IMR-90 (cell line): ENCODE measurements at regions of chr10 and their contacts with region 1.

Region 1: DNA sequence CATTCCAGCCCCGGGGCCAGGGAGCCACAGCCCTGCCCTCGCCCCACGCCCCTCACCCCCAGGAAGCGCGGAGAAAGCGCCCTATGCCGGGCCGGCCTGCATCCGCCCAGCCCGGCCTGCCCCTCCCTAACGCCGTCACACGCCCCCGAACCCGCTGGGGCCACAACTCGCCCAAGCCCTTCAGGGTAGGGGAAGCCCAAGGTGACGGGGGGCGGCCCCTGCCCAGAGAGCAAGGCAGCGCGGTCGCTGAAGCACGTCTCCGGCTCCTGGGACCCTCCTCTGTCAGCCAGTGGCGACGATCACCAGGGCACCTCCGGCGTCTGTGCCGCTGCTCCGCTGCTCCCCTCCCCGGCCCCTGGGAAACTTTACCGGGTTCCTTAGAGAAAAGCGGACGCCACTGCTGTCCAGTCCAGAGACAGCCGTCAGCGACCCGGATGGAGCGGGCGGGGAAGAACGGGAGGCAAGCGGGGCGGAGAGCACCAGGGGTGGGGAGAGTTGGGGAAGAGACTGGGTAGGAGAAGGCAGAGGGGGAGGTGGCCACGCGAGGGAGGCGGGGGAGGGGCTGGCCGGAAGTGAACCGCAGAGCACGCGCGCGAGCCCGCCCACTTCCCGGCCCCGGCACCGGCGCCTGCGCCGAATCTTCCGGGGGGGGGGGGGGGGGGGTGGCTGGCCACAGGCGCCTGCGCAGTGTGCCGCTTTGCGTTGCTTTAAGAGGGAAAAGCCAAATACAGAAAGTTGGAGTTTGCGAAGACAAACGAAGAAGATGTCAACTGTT is at the start of gene HERC4:
- DNase-seq: peak; percentile 92
- ATAC-seq: peak; percentile 94
- H3K4me3 ChIP-seq: peak within 1 kb of the TSS; percentile 92
- H3K27ac ChIP-seq: peak within 1 kb of the TSS; percentile 98
- H3K4me1 ChIP-seq: peaks cover 4% of the 10 kb centered on the region
- H3K27me3 ChIP-seq: no peaks in the 10 kb centered on the region
- CTCF ChIP-seq: no peak
- POLR2A ChIP-seq: peak; percentile 92
- RAD21 ChIP-seq: no peak
- total RNA-seq, gene HERC4: 92.8 and 177 TPM in 2 replicates

Region 2: GRCh38 chr10:67772894-67773511 is 302.0 kb before region 1 on chr10:
- CTCF ChIA-PET with region 1: no interaction called
- POLR2A ChIA-PET with region 1: no interaction called
- dilution Hi-C with region 1: no loop called
- in situ Hi-C with region 1: no loop called
- intact Hi-C with region 1: no loop called
- DNase-seq: peak; percentile 55
- ATAC-seq: peak; percentile 54; the same call in 1 of the 2 replicates
- H3K4me3 ChIP-seq: no peak overlapping the region
- H3K27ac ChIP-seq: no peak overlapping the region
- H3K4me1 ChIP-seq: 0 out of 2 replicates have a peak, but pooled peaks cover 2% of the 10 kb centered on the region
- H3K27me3 ChIP-seq: peaks cover 4% of the 10 kb centered on the region
- CTCF ChIP-seq: no peak
- POLR2A ChIP-seq: no peak
- RAD21 ChIP-seq: no peak

Region 3: GRCh38 chr10:67884313-67884841 is 190.6 kb before region 1 on chr10 and contains the start of gene SIRT1:
- CTCF ChIA-PET with region 1: no interaction called
- POLR2A ChIA-PET with region 1: no interaction called
- dilution Hi-C with region 1: no loop called
- in situ Hi-C with region 1: no loop called
- intact Hi-C with region 1: loop called (anchors 2 kb)
- DNase-seq: peak; percentile 90
- ATAC-seq: peak; percentile 91
- H3K4me3 ChIP-seq: peak within 1 kb of the TSS; percentile 56
- H3K27ac ChIP-seq: peak within 1 kb of the TSS; percentile 55
- H3K4me1 ChIP-seq: peaks cover 3% of the 10 kb centered on the region; the same call in 1 of the 2 replicates
- H3K27me3 ChIP-seq: no peaks in the 10 kb centered on the region
- CTCF ChIP-seq: no peak
- POLR2A ChIP-seq: peak; percentile 98
- RAD21 ChIP-seq: no peak
- total RNA-seq, gene SIRT1: 12.9 and 20.6 TPM in 2 replicates

Region 4: DNA sequence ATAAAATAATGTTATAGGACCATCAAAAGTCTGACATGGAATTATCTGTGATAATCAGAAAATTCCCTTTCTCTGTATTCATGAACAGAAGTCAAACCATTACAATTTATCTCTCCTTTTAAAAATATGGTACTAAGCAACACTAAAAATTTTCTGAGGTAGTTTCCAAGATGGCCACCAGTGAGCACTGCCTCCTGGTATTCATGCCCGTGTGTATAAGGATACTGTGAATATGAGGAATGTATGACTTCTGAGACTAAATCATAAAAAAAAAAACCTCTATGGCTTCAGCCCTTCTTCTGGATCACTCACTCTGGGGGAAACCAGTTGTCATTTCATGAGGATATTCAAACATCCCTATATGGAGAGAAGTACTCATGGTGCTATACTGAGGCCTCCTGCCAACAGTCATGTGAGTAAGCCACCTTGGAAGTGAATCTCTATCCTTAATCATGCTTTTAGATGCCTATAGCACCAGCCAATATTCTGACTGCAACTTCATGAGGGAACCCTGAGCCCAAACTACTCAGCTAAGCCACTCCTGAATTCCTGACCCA is 149.4 kb before region 1 on chr10:
- CTCF ChIA-PET with region 1: no interaction called
- POLR2A ChIA-PET with region 1: no interaction called
- dilution Hi-C with region 1: no loop called
- in situ Hi-C with region 1: no loop called
- intact Hi-C with region 1: loop called (anchors 5 kb)
- DNase-seq: peak; percentile 84
- ATAC-seq: peak; percentile 66
- H3K4me3 ChIP-seq: no peak overlapping the region
- H3K27ac ChIP-seq: 0 out of 2 replicates have a peak overlapping the region, but pooled peaks have one; percentile 1
- H3K4me1 ChIP-seq: peaks cover 4% of the 10 kb centered on the region; the same call in 1 of the 2 replicates
- H3K27me3 ChIP-seq: no peaks in the 10 kb centered on the region
- CTCF ChIP-seq: 0 out of 2 replicates have a peak, but pooled peaks have one; percentile 2
- POLR2A ChIP-seq: no peak
- RAD21 ChIP-seq: no peak

Region 5: GRCh38 chr10:68331455-68332258 is 256.7 kb after region 1 on chr10 and contains the start of gene HNRNPH3:
- CTCF ChIA-PET with region 1: no interaction called
- POLR2A ChIA-PET with region 1: no interaction called
- dilution Hi-C with region 1: no loop called
- in situ Hi-C with region 1: no loop called
- intact Hi-C with region 1: loop called (anchors 10 kb)
- DNase-seq: peak; percentile 97
- ATAC-seq: peak; percentile 86
- H3K4me3 ChIP-seq: peak within 1 kb of the TSS; percentile 98
- H3K27ac ChIP-seq: peak within 1 kb of the TSS; percentile 97
- H3K4me1 ChIP-seq: peaks cover 12% of the 10 kb centered on the region
- H3K27me3 ChIP-seq: no peaks in the 10 kb centered on the region
- CTCF ChIP-seq: no peak
- POLR2A ChIP-seq: peak; percentile 99
- RAD21 ChIP-seq: no peak
- total RNA-seq, gene HNRNPH3: 10.6 and 23.6 TPM in 2 replicates

Region 6: DNA sequence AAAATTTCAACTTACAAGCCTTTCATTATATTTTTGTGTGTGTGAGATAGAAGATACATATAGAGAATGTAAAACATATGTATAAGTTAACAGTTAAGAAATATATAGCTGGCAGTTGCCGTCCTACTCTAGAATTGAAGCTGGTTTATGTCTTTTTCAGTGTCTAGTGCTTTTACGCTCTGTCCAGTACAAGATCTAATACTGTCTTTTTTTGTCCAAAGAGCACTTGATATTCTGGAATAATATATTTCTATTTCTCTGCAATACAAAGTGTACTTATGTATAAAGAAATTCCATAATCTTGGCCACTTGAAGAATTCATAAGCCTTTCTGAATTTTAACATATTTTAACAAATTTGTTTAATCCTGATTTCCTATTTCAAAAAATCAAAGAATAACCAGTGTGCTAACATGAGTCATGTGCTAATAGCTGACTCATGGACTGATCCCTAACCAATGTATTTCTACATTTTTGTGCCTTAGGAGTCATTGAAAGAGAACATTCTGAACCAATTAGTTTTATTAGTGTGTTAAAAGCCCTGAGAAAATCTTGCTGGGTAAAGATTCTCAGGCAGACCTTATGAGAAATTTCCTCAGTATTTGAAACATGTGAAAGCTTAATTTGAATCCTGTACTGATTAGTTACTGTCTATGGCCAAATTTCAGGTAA is 572.8 kb after region 1 on chr10:
- CTCF ChIA-PET with region 1: no interaction called
- POLR2A ChIA-PET with region 1: no interaction called
- dilution Hi-C with region 1: no loop called
- in situ Hi-C with region 1: no loop called
- intact Hi-C with region 1: no loop called
- DNase-seq: peak; percentile 89
- ATAC-seq: peak; percentile 95
- H3K4me3 ChIP-seq: no peak overlapping the region
- H3K27ac ChIP-seq: 0 out of 2 replicates have a peak overlapping the region, but pooled peaks have one; percentile 55
- H3K4me1 ChIP-seq: peaks cover 2% of the 10 kb centered on the region; the same call in 1 of the 2 replicates
- H3K27me3 ChIP-seq: no peaks in the 10 kb centered on the region
- CTCF ChIP-seq: no peak
- POLR2A ChIP-seq: no peak
- RAD21 ChIP-seq: no peak